Activated CD4-positive, alpha-beta T cell treated with anti-CD3 and anti-CD28 coated beads for 36 hours (primary cell): ENCODE measurements at regions of chrX and their contacts with region 1.

Region 1: DNA sequence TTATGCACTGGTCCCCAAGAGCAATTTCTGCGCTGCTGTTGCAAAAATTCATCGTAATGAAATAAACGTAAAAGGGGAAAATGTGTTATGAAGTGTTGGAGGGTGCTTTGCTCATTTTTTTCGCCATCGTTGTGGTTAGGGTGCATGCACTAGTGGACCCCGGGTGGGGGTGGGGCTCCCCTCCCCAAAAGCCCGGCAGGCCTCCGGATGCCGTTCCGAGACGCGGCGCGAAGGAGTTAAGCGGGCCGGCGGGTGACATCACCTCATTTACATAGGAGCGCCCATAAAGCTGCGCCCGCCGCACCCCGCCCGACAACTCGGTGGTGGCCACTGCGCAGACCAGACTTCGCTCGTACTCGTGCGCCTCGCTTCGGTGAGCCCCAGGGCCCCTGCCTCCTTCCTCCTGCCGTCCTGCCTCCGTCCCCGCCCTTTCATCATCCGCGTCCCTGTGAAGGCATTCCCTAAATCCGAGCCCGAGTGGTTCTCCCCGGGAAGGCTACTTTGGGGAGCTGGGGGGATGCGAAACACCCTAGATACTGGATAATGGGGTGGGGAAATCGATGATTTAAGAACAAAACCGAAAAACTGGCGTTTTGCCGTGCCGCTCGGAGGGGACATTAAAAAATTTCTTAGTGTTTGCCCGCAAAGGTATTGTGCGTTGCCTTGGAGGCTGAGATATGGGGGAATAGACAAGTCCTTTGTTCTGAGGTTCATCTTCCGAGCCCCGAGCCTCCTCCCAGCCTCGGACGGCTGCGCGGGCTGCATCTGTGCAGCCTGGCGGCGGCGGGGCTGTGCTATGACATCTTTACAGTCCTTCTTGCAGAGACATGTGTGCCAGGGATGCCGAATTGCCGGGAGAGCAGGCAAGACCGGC is at the start of gene TMSB4X:
- DNase-seq: peak; percentile 91
- ATAC-seq: peak; percentile 52
- H3K4me3 Mint-ChIP-seq: peak within 1 kb of the TSS; percentile 90
- H3K27ac Mint-ChIP-seq: peak within 1 kb of the TSS; percentile 96
- H3K4me1 Mint-ChIP-seq: peaks cover 24% of the 10 kb centered on the region
- H3K27me3 Mint-ChIP-seq: no peaks in the 10 kb centered on the region
- total RNA-seq, gene TMSB4X: 3,666 to 4,468 TPM

Region 2: GRCh38 chrX:13376857-13377549 is 402.0 kb after region 1 on chrX:
- CTCF ChIA-PET with region 1: no interaction called
- POLR2A ChIA-PET with region 1: no interaction called
- intact Hi-C with region 1: loop called in 1 of 2 experiments (anchors 10 kb)
- DNase-seq: peak; percentile 32
- ATAC-seq: peak; percentile 52
- H3K4me3 Mint-ChIP-seq: no peak overlapping the region
- H3K27ac Mint-ChIP-seq: peak overlapping the region; percentile 7
- H3K4me1 Mint-ChIP-seq: peaks cover 30% of the 10 kb centered on the region
- H3K27me3 Mint-ChIP-seq: no peaks in the 10 kb centered on the region

Region 3: DNA sequence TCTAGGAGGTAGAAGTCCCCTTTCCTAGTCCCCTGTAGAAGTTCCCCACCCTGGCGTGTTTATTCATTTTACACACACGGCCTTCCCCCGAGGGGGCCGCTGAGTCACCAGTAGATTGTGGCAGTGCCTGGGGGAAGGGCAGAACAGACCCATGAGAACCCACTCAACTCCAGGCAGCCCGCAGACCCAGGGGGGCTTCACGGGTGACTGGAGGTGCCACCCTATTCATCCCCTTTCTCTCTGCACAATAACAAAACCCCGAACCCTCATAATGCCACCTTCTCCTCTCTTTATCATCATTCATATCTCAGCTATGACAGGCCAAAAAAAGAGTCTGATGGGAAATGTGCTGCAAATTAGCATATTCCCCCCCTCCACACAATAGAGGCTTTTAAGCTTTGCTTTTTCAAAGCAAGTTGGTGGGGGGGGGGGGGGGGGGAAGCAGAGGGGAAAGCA is 862.3 kb after region 1 on chrX:
- CTCF ChIA-PET with region 1: no interaction called
- POLR2A ChIA-PET with region 1: no interaction called
- intact Hi-C with region 1: no loop called
- DNase-seq: no peak
- ATAC-seq: no peak
- H3K4me3 Mint-ChIP-seq: no peak overlapping the region
- H3K27ac Mint-ChIP-seq: no peak overlapping the region
- H3K4me1 Mint-ChIP-seq: peaks cover 7% of the 10 kb centered on the region
- H3K27me3 Mint-ChIP-seq: no peaks in the 10 kb centered on the region